Mammary epithelial cell (primary cell): ENCODE measurements at regions of chr21 and their contacts with region 1.

Region 1: DNA sequence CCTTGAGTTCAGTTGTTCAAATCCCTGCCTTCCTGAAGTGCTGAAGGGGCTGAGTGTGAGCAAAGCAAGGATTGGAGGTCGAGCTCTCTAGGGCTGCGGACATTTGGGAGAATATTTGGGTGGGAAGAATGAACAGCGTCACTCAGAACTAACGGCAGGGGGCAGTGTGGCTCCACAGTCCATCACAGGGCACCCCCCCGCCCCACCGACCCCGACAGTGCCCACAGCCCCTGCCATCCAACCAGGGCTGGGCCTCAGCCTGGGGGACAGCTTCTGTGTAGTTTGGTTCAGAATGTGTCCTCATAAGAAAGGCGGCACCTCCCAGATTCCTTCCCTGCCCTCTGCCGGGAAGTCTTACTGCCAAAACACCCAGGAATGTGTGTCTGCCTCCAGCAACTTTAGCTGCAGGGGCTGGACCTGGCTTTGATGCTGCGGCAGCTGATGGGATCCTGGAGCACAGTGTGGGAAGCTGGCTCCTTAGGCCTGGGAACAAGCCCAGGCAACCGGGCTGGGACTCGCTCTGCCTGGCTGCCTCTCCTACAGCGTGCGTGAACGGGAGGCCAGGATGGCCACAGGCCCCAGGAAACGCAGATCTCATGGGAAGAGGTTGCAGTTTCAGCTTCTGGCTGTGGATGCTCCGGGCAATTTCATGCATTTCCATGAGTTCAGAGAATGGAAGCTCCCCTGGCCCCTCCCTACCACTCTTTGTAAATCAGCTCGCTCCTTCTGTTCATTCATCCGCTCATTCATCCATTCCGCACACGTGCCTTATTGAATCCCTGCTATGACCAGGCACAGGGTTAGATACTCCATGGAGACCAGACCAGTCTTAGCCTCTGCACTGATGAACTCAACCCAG is 104.9 kb upstream of the TMPRSS2 start:
- DNase-seq: peak; percentile 93
- H3K4me3 ChIP-seq: no peak overlapping the region
- H3K27ac ChIP-seq: peak overlapping the region; percentile 61
- H3K4me1 ChIP-seq: peaks cover 46% of the 10 kb centered on the region
- H3K27me3 ChIP-seq: no peaks in the 10 kb centered on the region
- CTCF ChIP-seq: peak; percentile 50 to 74

Region 2: GRCh38 chr21:41121785-41122421 is 491.0 kb before region 1 on chr21:
- CTCF ChIA-PET with region 1: no interaction called
- dilution Hi-C with region 1: no loop called
- in situ Hi-C with region 1: no loop called
- intact Hi-C with region 1: loop called (anchors 5 kb)
- DNase-seq: peak; percentile 70
- H3K4me3 ChIP-seq: no peak overlapping the region
- H3K27ac ChIP-seq: no peak overlapping the region
- H3K4me1 ChIP-seq: peaks cover 12% of the 10 kb centered on the region
- H3K27me3 ChIP-seq: no peaks in the 10 kb centered on the region
- CTCF ChIP-seq: peak; percentile 98 to 99

Region 3: DNA sequence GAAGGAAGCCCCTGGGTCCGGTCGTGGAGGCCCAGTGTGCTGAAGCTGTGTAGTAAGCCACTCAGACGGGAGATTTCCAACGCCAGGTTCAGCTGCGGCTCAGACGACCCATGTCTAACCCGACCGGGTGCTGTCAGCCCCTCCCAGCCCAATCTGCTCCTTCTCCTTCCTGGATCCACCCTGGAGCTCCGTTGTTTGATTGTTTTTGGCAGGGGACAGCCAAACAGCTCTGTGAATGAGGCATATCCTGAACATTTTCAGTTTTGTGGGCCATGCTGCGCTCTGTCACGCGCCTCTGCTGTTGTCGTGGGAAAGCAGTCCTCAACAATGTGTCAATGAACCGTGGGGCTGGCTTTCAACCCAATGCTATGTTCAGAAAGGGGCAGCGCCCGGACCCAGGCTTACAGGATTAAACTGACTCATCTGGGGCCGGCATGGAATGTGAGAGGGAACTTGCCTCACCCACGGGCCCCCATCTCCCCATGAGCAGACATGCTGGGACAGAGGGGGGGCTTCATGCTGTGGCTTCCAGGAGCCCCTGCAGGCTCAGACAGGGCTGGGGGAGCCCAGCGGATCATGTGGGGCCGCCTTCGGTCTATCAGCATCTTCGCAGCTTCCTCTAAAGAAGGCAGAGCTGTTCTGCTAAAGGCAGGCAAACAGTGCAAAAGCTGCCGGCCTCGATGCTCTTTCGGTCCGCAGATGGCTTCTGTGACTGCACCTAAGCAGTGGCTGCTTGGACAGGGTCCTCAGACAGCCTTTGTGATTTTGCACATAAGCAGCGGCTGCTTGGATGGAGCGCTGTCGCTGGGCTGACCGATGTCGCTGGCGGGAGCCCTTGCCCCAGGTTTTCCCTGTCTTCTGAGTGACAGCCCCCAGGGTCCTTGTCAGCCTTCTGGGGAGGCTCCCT is 52.2 kb after region 1 on chr21:
- CTCF ChIA-PET with region 1: no interaction called
- dilution Hi-C with region 1: no loop called
- in situ Hi-C with region 1: no loop called
- intact Hi-C with region 1: no loop called
- DNase-seq: no peak
- H3K4me3 ChIP-seq: no peak overlapping the region
- H3K27ac ChIP-seq: no peak overlapping the region
- H3K4me1 ChIP-seq: peaks cover 9% of the 10 kb centered on the region
- H3K27me3 ChIP-seq: no peaks in the 10 kb centered on the region
- CTCF ChIP-seq: no peak

Region 4: GRCh38 chr21:41678944-41679343 is 66.0 kb after region 1 on chr21:
- CTCF ChIA-PET with region 1: interaction called, 3 read pairs
- dilution Hi-C with region 1: loop called (anchors 5 kb)
- in situ Hi-C with region 1: loop called in 1 of 2 experiments (anchors 10 kb)
- intact Hi-C with region 1: loop called (anchors 1 kb)
- DNase-seq: peak; percentile 99
- H3K4me3 ChIP-seq: peak overlapping the region in 2 of 3 experiments; percentile 37 to 40
- H3K27ac ChIP-seq: peak overlapping the region; percentile 94
- H3K4me1 ChIP-seq: peaks cover 61% of the 10 kb centered on the region
- H3K27me3 ChIP-seq: no peaks in the 10 kb centered on the region
- CTCF ChIP-seq: no peak

Region 5: DNA sequence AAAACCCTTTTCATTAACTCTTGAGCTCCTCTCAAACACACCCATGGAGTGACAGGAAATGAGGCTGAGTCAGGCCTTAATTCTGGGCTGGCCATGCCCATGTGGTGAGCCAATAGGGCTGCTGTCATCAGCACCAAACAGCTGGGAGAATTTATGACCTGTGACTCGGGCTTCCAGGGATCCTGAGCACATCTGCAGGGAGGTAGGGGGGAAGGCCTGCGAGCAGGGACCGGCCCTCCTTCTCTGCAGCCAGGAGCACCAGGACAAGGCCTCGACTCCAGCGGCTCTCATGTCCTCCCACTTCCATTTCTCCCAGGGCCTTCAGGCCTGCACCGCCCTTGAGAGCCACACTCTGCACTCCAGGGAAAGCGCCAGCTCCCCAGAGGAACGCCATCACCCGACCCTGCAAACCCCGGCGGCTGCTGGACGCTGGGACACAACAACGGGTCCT is 139.4 kb after region 1 on chr21:
- CTCF ChIA-PET with region 1: interaction called, 4 read pairs
- dilution Hi-C with region 1: no loop called
- in situ Hi-C with region 1: no loop called
- intact Hi-C with region 1: loop called (anchors 1 kb)
- DNase-seq: peak; percentile 83
- H3K4me3 ChIP-seq: peak overlapping the region in 1 of 3 experiments; percentile 5
- H3K27ac ChIP-seq: peak overlapping the region; percentile 50
- H3K4me1 ChIP-seq: peaks cover 74% of the 10 kb centered on the region
- H3K27me3 ChIP-seq: no peaks in the 10 kb centered on the region
- CTCF ChIP-seq: no peak

Region 6: GRCh38 chr21:41783441-41784161 is 170.7 kb after region 1 on chr21:
- CTCF ChIA-PET with region 1: interaction called, 43 read pairs
- dilution Hi-C with region 1: no loop called
- in situ Hi-C with region 1: loop called in 1 of 2 experiments (anchors 5 kb)
- intact Hi-C with region 1: loop called (anchors 1 kb)
- DNase-seq: peak; percentile 98
- H3K4me3 ChIP-seq: no peak overlapping the region
- H3K27ac ChIP-seq: peak overlapping the region; percentile 81
- H3K4me1 ChIP-seq: peaks cover 41% of the 10 kb centered on the region
- H3K27me3 ChIP-seq: no peaks in the 10 kb centered on the region
- CTCF ChIP-seq: no peak

Region 7: GRCh38 chr21:41933313-41934086 is 320.6 kb after region 1 on chr21:
- CTCF ChIA-PET with region 1: interaction called, 3 read pairs
- dilution Hi-C with region 1: loop called (anchors 25 kb)
- in situ Hi-C with region 1: loop called (anchors 10 to 25 kb)
- intact Hi-C with region 1: loop called (anchors 1 kb)
- DNase-seq: peak; percentile 54
- H3K4me3 ChIP-seq: peak overlapping the region; percentile 29 to 43 (median 42)
- H3K27ac ChIP-seq: peak overlapping the region; percentile 89
- H3K4me1 ChIP-seq: peaks cover 54% of the 10 kb centered on the region
- H3K27me3 ChIP-seq: no peaks in the 10 kb centered on the region
- CTCF ChIP-seq: peak; percentile 45 to 66